MCF 10A (cell line): ENCODE measurements at regions of chr10 and their contacts with region 1.

Region 1: GRCh38 chr10:24238519-24239252 is 29.7 kb downstream of the KIAA1217 start:
- DNase-seq: peak; percentile 67
- H3K4me3 Mint-ChIP-seq: peak overlapping the region; percentile 63
- H3K27ac Mint-ChIP-seq: no peak overlapping the region
- H3K4me1 Mint-ChIP-seq: peaks cover 19% of the 10 kb centered on the region
- H3K27me3 Mint-ChIP-seq: peaks cover 13% of the 10 kb centered on the region
- CTCF ChIP-seq: no peak

Region 2: DNA sequence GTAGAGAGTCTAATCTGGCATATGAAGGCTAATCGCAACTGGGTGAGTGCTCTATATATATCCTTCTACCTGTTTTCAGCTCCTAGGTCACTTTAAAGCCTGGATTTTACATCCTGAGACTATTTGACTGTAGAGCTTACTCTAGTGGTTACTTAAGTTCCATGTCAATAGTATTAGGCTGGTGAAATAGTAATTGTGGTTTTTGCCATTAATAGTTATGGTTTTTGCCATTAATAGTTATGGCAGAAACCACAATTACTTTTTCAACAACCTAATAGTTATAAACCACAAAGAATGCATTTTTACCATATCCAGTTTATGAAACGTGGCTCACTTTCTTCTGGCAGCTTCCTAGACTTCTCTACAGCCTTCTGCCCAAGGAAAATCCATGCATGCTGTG is 292.8 kb before region 1 on chr10:
- CTCF ChIA-PET with region 1: no interaction called
- POLR2A ChIA-PET with region 1: no interaction called
- intact Hi-C with region 1: no loop called
- DNase-seq: no peak
- H3K4me3 Mint-ChIP-seq: no peak overlapping the region
- H3K27ac Mint-ChIP-seq: no peak overlapping the region
- H3K4me1 Mint-ChIP-seq: no peaks in the 10 kb centered on the region
- H3K27me3 Mint-ChIP-seq: peaks cover 21% of the 10 kb centered on the region
- CTCF ChIP-seq: no peak

Region 3: GRCh38 chr10:24209946-24210491 is 28.7 kb before region 1 on chr10:
- CTCF ChIA-PET with region 1: interaction called, 4 read pairs
- POLR2A ChIA-PET with region 1: interaction called, 27 read pairs
- intact Hi-C with region 1: no loop called
- DNase-seq: peak; percentile 74
- H3K4me3 Mint-ChIP-seq: peak overlapping the region; percentile 76
- H3K27ac Mint-ChIP-seq: peak overlapping the region; percentile 1
- H3K4me1 Mint-ChIP-seq: peaks cover 22% of the 10 kb centered on the region
- H3K27me3 Mint-ChIP-seq: no peaks in the 10 kb centered on the region
- CTCF ChIP-seq: no peak